CD8-positive, alpha-beta T cell (primary cell): ENCODE measurements at regions of chr19 and their contacts with region 1.

Region 1: GRCh38 chr19:45779231-45780145 is 2.8 kb downstream of the DMPK start:
- DNase-seq: peak; percentile 51 to 89 (median 72)
- ATAC-seq: peak; percentile 96
- H3K4me3 ChIP-seq: peak overlapping the region; percentile 25 to 41
- H3K4me3 Mint-ChIP-seq: peak overlapping the region; percentile 77
- H3K27ac ChIP-seq: no peak overlapping the region
- H3K27ac Mint-ChIP-seq: no peak overlapping the region
- H3K4me1 ChIP-seq: peaks cover 19% of the 10 kb centered on the region
- H3K4me1 Mint-ChIP-seq: peaks cover 22% of the 10 kb centered on the region
- H3K27me3 ChIP-seq: peaks cover 16 to 24% of the 10 kb centered on the region in 2 experiments
- H3K27me3 Mint-ChIP-seq: peaks cover 36% of the 10 kb centered on the region
- CTCF ChIP-seq: peak; percentile 67

Region 2: GRCh38 chr19:45691516-45692186 is 87.8 kb before region 1 on chr19 and contains the start of gene SNRPD2:
- CTCF ChIA-PET with region 1: no interaction called
- POLR2A ChIA-PET with region 1: no interaction called
- intact Hi-C with region 1: no loop called
- DNase-seq: peak in 8 of 9 experiments; percentile 83 to 96 (median 91)
- ATAC-seq: peak; percentile 48
- H3K4me3 ChIP-seq: peak within 1 kb of the TSS; percentile 74 to 95
- H3K4me3 Mint-ChIP-seq: peak within 1 kb of the TSS; percentile 95
- H3K27ac ChIP-seq: peak within 1 kb of the TSS; percentile 90 to 91
- H3K27ac Mint-ChIP-seq: peak within 1 kb of the TSS; percentile 94
- H3K4me1 ChIP-seq: peaks cover 17% of the 10 kb centered on the region
- H3K4me1 Mint-ChIP-seq: peaks cover 27% of the 10 kb centered on the region
- H3K27me3 ChIP-seq: no peaks in the 10 kb centered on the region
- H3K27me3 Mint-ChIP-seq: no peaks in the 10 kb centered on the region
- CTCF ChIP-seq: no peak
- total RNA-seq, gene SNRPD2: 301 to 313 TPM

Region 3: DNA sequence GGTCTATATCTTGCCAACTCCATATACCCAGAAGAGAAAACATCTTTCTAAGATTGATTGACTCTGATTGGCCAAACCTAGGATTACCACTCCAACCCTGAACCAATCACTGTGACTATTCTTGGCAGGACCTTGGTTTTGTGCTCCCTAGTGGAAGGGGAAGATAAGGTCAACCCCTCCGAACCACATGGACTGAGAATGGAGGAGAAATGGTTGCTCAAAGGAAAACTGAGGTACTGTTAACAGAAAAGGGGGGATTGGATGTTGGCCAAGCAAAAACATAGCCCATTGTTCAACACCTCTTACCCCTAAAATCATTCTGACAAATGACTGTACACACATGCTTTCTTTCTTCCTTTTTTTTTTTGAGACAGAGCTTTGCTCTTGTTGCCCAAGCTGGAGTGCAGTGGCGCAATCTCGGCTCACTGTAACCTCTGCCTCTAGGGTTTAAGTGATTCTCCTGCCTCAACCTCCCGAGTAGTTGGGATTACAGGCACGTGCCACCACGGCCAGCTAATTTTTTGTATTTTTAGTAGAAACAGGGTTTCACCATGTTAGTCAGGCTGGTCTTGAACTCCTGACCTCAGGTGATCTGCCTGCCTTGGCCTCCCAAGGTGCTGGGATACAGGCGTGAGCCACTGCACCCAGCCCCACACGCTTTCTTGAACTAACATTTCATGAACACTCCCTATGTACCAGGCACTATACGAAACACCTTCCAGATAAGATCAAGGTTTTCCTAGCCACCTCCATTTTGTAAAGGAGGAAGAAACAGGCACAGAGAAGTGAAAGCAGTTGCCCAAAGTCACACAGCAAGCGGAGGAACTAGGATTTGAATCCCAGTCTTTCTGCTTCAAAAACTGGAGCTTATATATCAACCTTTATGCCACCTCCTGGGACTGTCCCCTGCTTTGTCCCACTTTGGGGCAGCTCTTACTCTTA is 39.7 kb before region 1 on chr19:
- CTCF ChIA-PET with region 1: no interaction called
- POLR2A ChIA-PET with region 1: no interaction called
- intact Hi-C with region 1: no loop called
- DNase-seq: no peak
- ATAC-seq: no peak
- H3K4me3 ChIP-seq: no peak overlapping the region
- H3K4me3 Mint-ChIP-seq: no peak overlapping the region
- H3K27ac ChIP-seq: no peak overlapping the region
- H3K27ac Mint-ChIP-seq: no peak overlapping the region
- H3K4me1 ChIP-seq: no peaks in the 10 kb centered on the region
- H3K4me1 Mint-ChIP-seq: no peaks in the 10 kb centered on the region
- H3K27me3 ChIP-seq: no peaks in the 10 kb centered on the region
- H3K27me3 Mint-ChIP-seq: peaks cover 6% of the 10 kb centered on the region
- CTCF ChIP-seq: no peak

Region 4: GRCh38 chr19:45792470-45793177 is 13.1 kb after region 1 on chr19 and contains the start of gene DMWD:
- CTCF ChIA-PET with region 1: interaction called, 313 read pairs
- POLR2A ChIA-PET with region 1: interaction called, 4 read pairs
- intact Hi-C with region 1: loop called (anchors 1 kb)
- DNase-seq: peak; percentile 99 to 100 (median 99)
- ATAC-seq: peak; percentile 96
- H3K4me3 ChIP-seq: peak within 1 kb of the TSS; percentile 55 to 62
- H3K4me3 Mint-ChIP-seq: peak within 1 kb of the TSS; percentile 90
- H3K27ac ChIP-seq: peak within 1 kb of the TSS; percentile 37 to 63
- H3K27ac Mint-ChIP-seq: peak within 1 kb of the TSS; percentile 75
- H3K4me1 ChIP-seq: peaks cover 28% of the 10 kb centered on the region
- H3K4me1 Mint-ChIP-seq: peaks cover 37% of the 10 kb centered on the region
- H3K27me3 ChIP-seq: peaks cover 3 to 6% of the 10 kb centered on the region in 2 experiments
- H3K27me3 Mint-ChIP-seq: peaks cover 18% of the 10 kb centered on the region
- CTCF ChIP-seq: no peak
- total RNA-seq, gene DMWD: 23.8 to 25.5 TPM